ENCODE measurements at regions of chr17 and their contacts with region 1.

Region 1: DNA sequence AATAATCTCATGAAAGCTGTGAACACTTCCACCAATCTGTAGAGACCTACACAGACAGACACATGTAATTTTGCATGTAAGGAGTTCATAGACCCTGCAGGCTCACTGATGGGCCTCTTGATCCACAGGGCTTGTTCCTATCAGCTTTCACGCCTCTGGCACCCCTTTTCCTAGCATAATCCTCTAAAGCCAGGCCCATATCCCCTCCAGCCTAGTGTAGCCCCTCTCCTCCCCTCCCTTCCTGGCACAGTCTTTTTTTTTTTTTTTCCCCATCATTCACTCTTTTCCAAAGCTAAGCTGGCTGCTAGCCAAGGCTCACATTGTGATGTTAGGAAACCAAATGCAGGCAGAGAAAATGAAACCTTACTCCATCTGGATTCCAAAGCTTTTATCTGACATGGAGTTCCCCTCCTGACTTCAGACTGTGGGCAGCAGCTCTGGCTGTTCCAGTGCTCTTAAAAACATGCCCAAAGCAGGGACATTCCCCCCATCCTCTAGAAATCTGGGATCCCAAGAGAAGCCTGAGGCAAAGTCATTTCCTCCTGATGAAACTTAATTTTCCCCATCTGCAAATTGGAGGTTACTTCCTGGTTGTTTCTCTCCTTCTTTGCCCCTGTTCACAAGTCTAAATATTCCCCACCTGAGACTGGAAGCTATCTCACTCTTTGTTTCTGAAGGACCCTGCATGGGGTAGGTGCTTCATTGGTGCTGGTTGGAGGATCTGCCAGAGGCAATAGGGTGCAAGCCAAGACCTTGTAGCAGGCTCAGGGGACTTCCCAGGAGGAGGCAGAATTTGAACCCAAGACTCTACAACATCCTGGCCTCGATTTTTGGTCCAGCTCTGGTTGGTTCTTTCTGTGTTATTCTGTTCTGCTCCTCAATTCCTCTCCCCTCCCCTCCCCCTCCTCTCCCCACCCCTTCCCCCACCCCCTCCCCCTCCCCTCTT is 9.9 kb upstream of the CCL5 start:
- DNase-seq: no peak
- H3K4me3 Mint-ChIP-seq: no peak overlapping the region
- H3K27ac Mint-ChIP-seq: peak overlapping the region; percentile 90
- H3K4me1 Mint-ChIP-seq: peaks cover 55% of the 10 kb centered on the region
- H3K27me3 Mint-ChIP-seq: no peaks in the 10 kb centered on the region

Region 2: GRCh38 chr17:35684055-35684802 is 205.9 kb before region 1 on chr17:
- CTCF ChIA-PET with region 1: no interaction called
- POLR2A ChIA-PET with region 1: no interaction called
- DNase-seq: no peak
- H3K4me3 Mint-ChIP-seq: no peak overlapping the region
- H3K27ac Mint-ChIP-seq: no peak overlapping the region
- H3K4me1 Mint-ChIP-seq: peaks cover 4% of the 10 kb centered on the region
- H3K27me3 Mint-ChIP-seq: no peaks in the 10 kb centered on the region

Region 3: GRCh38 chr17:35879773-35880654 is 10.1 kb before region 1 on chr17 and contains the start of gene CCL5:
- CTCF ChIA-PET with region 1: interaction called, 23 read pairs
- POLR2A ChIA-PET with region 1: interaction called, 3 read pairs
- DNase-seq: peak; percentile 50
- H3K4me3 Mint-ChIP-seq: peak within 1 kb of the TSS; percentile 64
- H3K27ac Mint-ChIP-seq: peak within 1 kb of the TSS; percentile 79
- H3K4me1 Mint-ChIP-seq: peaks cover 58% of the 10 kb centered on the region
- H3K27me3 Mint-ChIP-seq: no peaks in the 10 kb centered on the region
- total RNA-seq, gene CCL5: 68.7 to 81.3 TPM